ENCODE measurements at regions of chr6 and their contacts with region 1.

Region 1: DNA sequence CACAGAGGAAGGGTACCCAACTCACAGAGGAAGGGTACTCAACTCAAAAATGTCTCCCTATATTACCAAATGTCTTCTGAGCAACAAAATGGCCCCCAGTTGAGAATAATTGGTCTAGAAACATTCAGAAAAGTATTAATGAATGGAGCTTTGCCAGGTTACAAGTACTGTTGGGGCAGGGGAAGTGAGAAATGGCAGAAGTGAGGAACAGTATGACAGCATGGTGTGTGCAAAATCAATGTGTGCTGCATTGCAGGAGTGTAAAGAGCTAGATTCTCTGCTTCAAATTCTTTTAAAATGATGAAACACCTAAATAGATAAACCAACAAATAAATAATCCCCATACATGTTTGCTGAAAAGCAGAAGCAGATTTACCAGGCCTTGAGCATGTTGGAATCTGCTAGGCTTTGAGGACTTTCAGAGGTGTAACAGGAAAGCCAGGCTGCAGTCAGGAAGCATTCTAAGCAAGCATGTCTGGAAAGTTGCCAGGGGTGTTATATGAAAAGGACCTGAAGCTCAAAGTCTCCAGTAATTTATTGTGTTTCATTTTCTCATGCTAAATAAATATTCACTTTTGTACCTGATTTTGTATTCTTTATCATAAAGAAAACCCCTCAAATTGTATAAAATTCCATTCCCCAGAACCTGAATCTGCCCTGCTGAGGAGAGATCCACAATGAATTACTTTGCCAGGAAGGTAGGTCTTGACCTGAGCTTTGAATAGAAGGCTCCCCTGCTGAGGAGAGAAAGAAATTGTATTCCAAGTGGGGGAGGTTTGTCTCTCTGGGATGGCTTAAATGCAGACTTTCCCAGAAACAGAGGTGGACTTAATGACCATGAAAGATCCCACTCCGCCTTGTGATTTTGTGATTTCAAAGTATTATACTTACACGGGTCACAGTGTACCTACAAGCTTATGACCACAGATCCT is 265.0 kb upstream of the MARCKS start:
- DNase-seq: no peak
- H3K4me3 ChIP-seq: no peak overlapping the region
- H3K27ac ChIP-seq: peak overlapping the region in 1 of 4 donors; percentile 2
- H3K4me1 ChIP-seq: peaks cover 0 to 31% (median 28%) of the 10 kb centered on the region in 4 donors
- H3K27me3 ChIP-seq: no peaks in the 10 kb centered on the region
- CTCF ChIP-seq: no peak
- EP300 ChIP-seq: no peak
- POLR2A ChIP-seq: no peak

Region 2: GRCh38 chr6:113632220-113632864 is 40.2 kb after region 1 on chr6:
- intact Hi-C with region 1: loop called (anchors 5 kb)
- DNase-seq: no peak
- H3K4me3 ChIP-seq: peak overlapping the region in 3 of 4 donors; percentile 24 to 28 (median 28)
- H3K27ac ChIP-seq: peak overlapping the region; percentile 41 to 62 (median 48)
- H3K4me1 ChIP-seq: peaks cover 2 to 56% (median 45%) of the 10 kb centered on the region in 4 donors
- H3K27me3 ChIP-seq: no peaks in the 10 kb centered on the region
- CTCF ChIP-seq: no peak
- EP300 ChIP-seq: no peak
- POLR2A ChIP-seq: no peak

Measured in sigmoid colon (tissue), 7 donors.